HepG2 (cell line): ENCODE measurements at regions of chrX and their contacts with region 1.

Region 1: GRCh38 chrX:14757761-14758491 is 114.9 kb downstream of the FANCB start:
- DNase-seq: peak; percentile 82
- ATAC-seq: peak; percentile 95
- H3K4me3 ChIP-seq: peak overlapping the region; percentile 64 to 72 (median 66)
- H3K27ac ChIP-seq: peak overlapping the region; percentile 81
- H3K4me1 ChIP-seq: peaks cover 22% of the 10 kb centered on the region
- H3K27me3 ChIP-seq: no peaks in the 10 kb centered on the region
- CTCF ChIP-seq: peak; percentile 36
- EP300 ChIP-seq: peak in 1 of 2 experiments; percentile 12; a peak in 1 of 4 replicates
- POLR2A ChIP-seq: peak; percentile 30 to 50; a peak in 1 of 4 replicates
- RAD21 ChIP-seq: no peak

Region 2: DNA sequence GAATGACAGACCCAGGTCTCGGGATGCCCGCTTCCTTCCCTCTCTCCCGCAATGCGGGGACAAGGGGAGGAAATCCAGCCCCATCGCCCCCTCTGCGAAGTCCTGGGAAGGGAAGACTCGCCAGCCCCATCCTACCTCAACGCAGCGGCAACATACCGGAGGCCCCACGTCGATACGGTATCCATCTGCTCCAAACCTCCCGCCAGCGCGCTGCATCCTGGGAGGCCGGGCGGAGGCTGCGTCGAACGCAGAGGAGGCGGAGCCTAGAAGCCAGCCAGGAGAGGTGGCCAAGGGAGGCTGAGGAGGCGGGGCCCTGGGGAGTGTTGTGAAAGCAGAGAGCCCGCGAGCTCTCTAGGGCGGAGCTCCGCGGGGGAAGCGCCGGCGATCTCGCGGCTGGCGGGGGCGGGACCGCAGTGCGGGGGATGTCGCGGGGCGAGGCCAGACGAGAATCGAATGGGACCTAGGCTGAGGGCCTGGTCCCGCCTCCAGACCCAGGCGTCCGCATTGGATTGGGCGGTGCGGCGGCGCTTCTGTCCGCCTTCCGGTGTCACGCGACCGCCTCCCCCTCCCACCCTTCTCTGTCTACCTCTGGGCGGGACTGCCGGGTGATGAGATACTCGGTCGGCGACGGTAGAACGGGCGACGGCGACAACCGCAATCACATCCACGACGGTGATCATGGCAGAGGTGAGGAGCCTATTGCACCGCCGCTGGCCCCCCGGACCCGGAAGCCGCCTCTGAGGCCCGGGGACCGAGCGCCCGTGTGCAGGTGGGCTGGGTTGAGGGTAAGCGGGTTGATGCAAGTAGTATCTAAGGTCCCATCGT is 115.1 kb after region 1 on chrX and contains the starts of genes FANCB and MOSPD2:
- CTCF ChIA-PET with region 1: no interaction called
- POLR2A ChIA-PET with region 1: no interaction called
- in situ Hi-C with region 1: no loop called
- intact Hi-C with region 1: loop called (anchors 5 kb)
- DNase-seq: peak; percentile 90
- ATAC-seq: peak; percentile 99
- H3K4me3 ChIP-seq: peak within 1 kb of the TSS; percentile 67 to 83 (median 82)
- H3K27ac ChIP-seq: peak within 1 kb of the TSS; percentile 73
- H3K4me1 ChIP-seq: peaks cover 10% of the 10 kb centered on the region; the same call in 1 of the 2 replicates
- H3K27me3 ChIP-seq: no peaks in the 10 kb centered on the region; a peak in 1 of 5 replicates
- CTCF ChIP-seq: no peak
- EP300 ChIP-seq: no peak
- POLR2A ChIP-seq: peak; percentile 53 to 60; a peak in 3 of 4 replicates
- RAD21 ChIP-seq: no peak
- total RNA-seq, gene FANCB: 5.8 and 9.2 TPM in 2 replicates
- total RNA-seq, gene MOSPD2: 7.0 and 11.3 TPM in 2 replicates